Right ventricle myocardium inferior (tissue), 1 donor: ENCODE measurements at regions of chr1 and their contacts with region 1.

Region 1: GRCh38 chr1:110230381-110231199 is 20.5 kb downstream of the KCNC4 start:
- DNase-seq: no peak
- ATAC-seq: no peak

Region 2: DNA sequence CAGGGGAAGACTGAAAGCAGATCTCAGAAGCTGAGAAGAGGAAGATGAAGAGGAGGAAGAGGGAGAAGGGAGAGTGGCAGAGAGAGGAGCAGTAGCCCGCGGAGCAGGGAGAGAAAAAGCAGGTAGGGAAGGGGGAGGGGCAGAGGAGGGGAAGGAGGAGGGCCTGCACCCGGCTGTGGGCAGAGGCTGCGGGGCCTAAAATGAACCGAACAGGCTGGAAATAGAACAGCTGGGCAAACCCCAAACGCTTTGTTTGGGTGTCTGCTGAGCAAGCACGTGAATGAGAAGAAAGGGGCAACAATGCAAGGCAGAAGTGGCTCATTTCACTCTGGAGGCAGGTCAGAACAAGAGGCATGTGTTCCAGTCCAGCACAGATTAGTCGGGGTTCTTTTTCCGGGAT is 13.0 kb after region 1 on chr1:
- intact Hi-C with region 1: loop called (anchors 1 kb)
- DNase-seq: no peak
- ATAC-seq: no peak